HepG2 (cell line): ENCODE measurements at regions of chrX and their contacts with region 1.

Region 1: DNA sequence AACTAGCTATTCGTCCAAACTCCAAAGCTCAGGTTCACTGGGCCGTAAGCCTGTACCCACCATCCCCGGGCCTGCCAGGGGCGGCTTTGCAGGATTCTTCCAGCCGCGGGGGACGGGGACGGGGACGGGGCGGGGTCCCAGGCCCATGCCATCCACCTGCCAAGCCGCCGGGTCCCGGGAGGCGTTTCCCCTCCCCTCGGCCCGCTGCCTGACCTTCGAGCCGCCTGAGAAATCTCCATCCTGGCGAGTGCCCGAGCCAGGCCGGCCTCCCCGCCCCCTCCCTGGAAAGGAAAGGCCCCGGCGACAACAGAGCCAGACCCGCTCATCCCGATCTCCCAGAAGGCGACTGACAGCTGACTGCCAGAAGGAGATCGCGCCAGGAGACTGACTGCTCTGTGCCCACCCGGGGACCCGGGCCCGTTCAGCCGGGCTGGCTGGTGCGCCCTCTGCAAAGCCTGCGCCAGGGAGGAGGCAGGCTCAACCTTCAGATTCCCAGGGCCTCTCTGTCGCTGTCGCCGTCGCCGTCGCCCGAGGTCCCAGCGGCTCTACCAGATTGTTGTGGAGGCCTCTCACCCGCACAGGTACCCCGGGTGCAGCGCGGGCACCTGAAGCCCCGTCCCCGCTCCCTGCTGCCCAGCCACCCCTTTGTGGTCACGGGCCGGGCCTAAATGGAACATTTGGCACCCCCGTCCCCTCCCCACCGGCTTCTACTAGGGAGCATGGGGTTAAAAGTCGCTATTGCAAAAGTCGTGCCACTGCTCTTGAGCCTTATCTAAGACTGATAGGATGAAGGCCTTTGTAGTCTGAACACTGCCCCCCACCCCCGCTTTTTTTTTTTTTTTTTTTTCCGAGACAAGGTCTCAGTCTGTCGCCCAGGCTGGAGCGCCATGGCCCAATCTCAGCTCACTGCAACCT is at the start of gene RGN:
- DNase-seq: peak; percentile 81
- ATAC-seq: peak; percentile 69
- H3K4me3 ChIP-seq: peak within 1 kb of the TSS; percentile 59 to 74 (median 68); a peak in 5 of 6 replicates
- H3K27ac ChIP-seq: peak within 1 kb of the TSS; percentile 96
- H3K4me1 ChIP-seq: peaks cover 43% of the 10 kb centered on the region
- H3K27me3 ChIP-seq: no peaks in the 10 kb centered on the region
- CTCF ChIP-seq: no peak
- EP300 ChIP-seq: peak in 1 of 2 experiments; percentile 82; a peak in 1 of 4 replicates
- POLR2A ChIP-seq: peak in 1 of 2 experiments; percentile 58; a peak in 1 of 4 replicates
- RAD21 ChIP-seq: no peak
- total RNA-seq, gene RGN: 74.4 and 76.6 TPM in 2 replicates

Region 2: DNA sequence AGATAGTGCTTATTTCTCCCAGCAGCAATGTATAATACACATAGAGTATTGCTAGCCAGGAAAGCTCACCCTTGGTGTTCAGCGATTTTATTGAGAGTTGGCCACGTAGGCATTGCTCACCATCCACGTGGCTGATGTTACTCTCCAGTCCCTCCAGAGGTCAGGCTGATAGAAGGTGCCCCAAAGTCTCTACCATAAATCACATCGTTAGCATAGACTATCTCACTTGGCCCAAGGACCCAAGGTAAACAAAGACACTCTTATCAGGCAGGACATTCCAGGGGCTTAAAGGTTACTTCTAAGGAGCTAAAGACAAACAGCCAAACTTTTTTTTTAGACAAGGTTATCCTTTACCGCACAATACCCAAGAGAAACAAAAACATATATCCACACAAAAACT is 30.4 kb before region 1 on chrX:
- CTCF ChIA-PET with region 1: no interaction called
- POLR2A ChIA-PET with region 1: no interaction called
- in situ Hi-C with region 1: no loop called
- intact Hi-C with region 1: no loop called
- DNase-seq: no peak
- ATAC-seq: no peak; the same call in 2 of the 3 replicates
- H3K4me3 ChIP-seq: no peak overlapping the region
- H3K27ac ChIP-seq: no peak overlapping the region
- H3K4me1 ChIP-seq: peaks cover 8% of the 10 kb centered on the region; the same call in 1 of the 2 replicates
- H3K27me3 ChIP-seq: no peaks in the 10 kb centered on the region
- CTCF ChIP-seq: peak; percentile 26; the same call in 1 of the 2 replicates
- EP300 ChIP-seq: no peak
- POLR2A ChIP-seq: no peak
- RAD21 ChIP-seq: no peak

Region 3: GRCh38 chrX:47059142-47059874 is 19.1 kb before region 1 on chrX:
- CTCF ChIA-PET with region 1: no interaction called
- POLR2A ChIA-PET with region 1: interaction called, 20 read pairs
- in situ Hi-C with region 1: no loop called
- intact Hi-C with region 1: no loop called
- DNase-seq: no peak
- ATAC-seq: peak; percentile 67; the same call in 2 of the 3 replicates
- H3K4me3 ChIP-seq: no peak overlapping the region; a peak in 1 of 6 replicates
- H3K27ac ChIP-seq: peak overlapping the region; percentile 48
- H3K4me1 ChIP-seq: peaks cover 76% of the 10 kb centered on the region
- H3K27me3 ChIP-seq: no peaks in the 10 kb centered on the region
- CTCF ChIP-seq: no peak
- EP300 ChIP-seq: no peak
- POLR2A ChIP-seq: no peak
- RAD21 ChIP-seq: no peak

Region 4: GRCh38 chrX:47068214-47068613 is 10.2 kb before region 1 on chrX:
- CTCF ChIA-PET with region 1: no interaction called
- POLR2A ChIA-PET with region 1: interaction called, 31 read pairs
- in situ Hi-C with region 1: no loop called
- intact Hi-C with region 1: no loop called
- DNase-seq: peak; percentile 69
- ATAC-seq: peak; percentile 72
- H3K4me3 ChIP-seq: peak overlapping the region in 1 of 3 experiments; percentile 26; a peak in 1 of 6 replicates
- H3K27ac ChIP-seq: peak overlapping the region; percentile 84
- H3K4me1 ChIP-seq: peaks cover 43% of the 10 kb centered on the region
- H3K27me3 ChIP-seq: no peaks in the 10 kb centered on the region
- CTCF ChIP-seq: no peak
- EP300 ChIP-seq: no peak
- POLR2A ChIP-seq: no peak
- RAD21 ChIP-seq: no peak

Region 5: DNA sequence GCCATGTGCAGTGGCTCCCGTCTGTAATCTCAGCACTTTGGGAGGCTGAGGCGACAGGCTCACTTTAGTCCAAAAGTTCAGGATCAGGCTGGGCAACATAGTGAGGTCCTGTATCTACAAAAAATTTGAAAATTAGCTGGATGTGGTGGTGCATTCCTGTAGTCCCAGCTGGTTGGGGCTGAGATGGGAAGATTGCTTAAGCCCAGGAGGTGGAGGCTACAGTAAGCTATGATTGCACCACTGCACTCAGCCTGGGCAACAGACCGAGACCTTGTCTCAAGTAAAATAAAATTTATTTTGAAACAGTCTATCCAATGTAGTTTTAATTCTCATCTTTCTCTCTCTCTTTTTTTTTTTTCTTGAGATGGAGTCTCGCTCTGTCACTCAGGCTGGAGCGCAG is 87.7 kb after region 1 on chrX:
- CTCF ChIA-PET with region 1: no interaction called
- POLR2A ChIA-PET with region 1: no interaction called
- in situ Hi-C with region 1: no loop called
- intact Hi-C with region 1: no loop called
- DNase-seq: no peak
- ATAC-seq: no peak
- H3K4me3 ChIP-seq: no peak overlapping the region
- H3K27ac ChIP-seq: no peak overlapping the region
- H3K4me1 ChIP-seq: peaks cover 31% of the 10 kb centered on the region
- H3K27me3 ChIP-seq: no peaks in the 10 kb centered on the region
- CTCF ChIP-seq: no peak
- EP300 ChIP-seq: no peak
- POLR2A ChIP-seq: no peak
- RAD21 ChIP-seq: no peak